Breast epithelium (tissue), 4 donors: ENCODE measurements at regions of chr11 and their contacts with region 1.

Region 1: GRCh38 chr11:2134022-2135010 is 4.9 kb downstream of the IGF2 start:
- DNase-seq: no peak
- H3K4me3 ChIP-seq: no peak overlapping the region
- H3K27ac ChIP-seq: no peak overlapping the region
- H3K4me1 ChIP-seq: peaks cover 7 to 8% of the 10 kb centered on the region in 2 donors
- H3K27me3 ChIP-seq: peaks cover 3 to 81% of the 10 kb centered on the region in 2 donors
- CTCF ChIP-seq: no peak
- POLR2A ChIP-seq: no peak

Region 2: DNA sequence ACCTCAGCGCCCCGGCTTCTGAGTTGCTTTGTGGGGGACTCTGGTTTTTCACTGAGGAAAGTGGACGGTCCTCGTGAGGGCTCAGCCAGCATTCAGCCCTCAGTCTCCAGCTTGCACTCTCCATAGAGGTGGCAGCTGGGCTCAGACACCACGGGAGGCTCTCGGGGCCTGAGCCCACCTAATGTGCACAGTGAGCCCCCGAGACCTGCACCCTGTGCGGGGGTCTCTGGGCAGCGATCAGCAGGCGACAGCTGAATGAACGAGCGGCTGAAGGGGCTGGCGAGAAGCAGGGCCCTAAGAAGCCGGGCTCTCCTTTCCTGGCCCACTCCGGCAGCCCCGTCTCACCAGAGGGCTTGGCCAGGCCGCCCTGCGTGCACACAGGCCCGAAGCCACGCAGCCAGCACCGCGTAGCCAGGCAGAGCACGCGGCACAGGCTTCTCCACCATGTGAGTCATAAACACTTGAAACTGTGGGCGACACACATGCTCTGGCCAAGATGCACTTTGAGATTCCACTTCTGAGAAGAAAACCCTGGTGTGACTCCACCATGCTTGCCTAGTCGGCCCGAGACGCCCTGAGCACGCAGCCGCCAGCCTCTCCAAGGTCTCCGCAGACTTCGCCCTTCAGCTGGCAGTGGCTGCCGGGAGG is 852.9 kb before region 1 on chr11:
- intact Hi-C with region 1: loop called (anchors 5 kb)
- DNase-seq: no peak
- H3K4me3 ChIP-seq: no peak overlapping the region
- H3K27ac ChIP-seq: peak overlapping the region in 1 of 2 donors; percentile 68
- H3K4me1 ChIP-seq: no peaks in the 10 kb centered on the region
- H3K27me3 ChIP-seq: no peaks in the 10 kb centered on the region
- CTCF ChIP-seq: no peak
- POLR2A ChIP-seq: no peak

Region 3: DNA sequence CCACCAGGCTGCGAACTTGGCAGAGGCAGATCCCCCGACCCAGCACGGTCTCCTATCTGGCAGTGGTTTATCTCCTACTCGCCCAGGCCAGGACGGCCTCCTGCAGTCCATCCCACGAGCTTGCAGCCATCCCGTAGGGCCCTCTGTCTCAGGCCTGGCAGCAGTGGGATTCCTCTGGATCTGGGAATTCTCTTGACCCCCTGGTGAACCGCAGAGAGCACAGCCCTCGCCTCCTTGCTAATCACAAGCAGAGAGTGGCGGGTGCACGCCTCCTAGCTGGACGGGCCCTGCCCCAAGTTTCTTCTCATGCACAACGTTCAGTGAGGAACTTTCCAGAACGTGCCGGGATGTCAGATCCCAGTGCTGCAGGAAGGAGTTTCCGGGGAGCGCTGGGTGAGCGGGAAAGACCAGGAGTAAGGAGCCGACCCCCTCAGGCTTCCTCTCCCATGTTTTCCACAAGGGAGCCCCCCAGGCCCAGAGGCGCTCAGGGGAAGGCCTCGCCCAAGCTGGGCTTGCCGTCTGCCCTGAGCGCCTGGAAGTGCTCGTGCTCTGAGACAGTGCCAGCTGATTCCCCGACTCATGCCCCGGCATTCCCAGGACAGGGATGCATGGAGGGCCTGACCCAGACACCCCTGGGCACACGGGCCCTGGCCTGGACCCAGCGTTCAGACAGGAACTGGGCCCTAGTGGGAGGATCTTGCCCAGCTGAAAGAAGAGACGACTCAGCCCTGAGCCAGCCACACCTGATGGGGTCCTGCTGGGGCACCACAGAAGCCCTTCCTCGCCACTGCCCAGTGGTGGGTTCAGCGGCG is 19.7 kb before region 1 on chr11:
- intact Hi-C with region 1: no loop called
- DNase-seq: no peak
- H3K4me3 ChIP-seq: no peak overlapping the region
- H3K27ac ChIP-seq: no peak overlapping the region
- H3K4me1 ChIP-seq: no peaks in the 10 kb centered on the region
- H3K27me3 ChIP-seq: no peaks in the 10 kb centered on the region
- CTCF ChIP-seq: no peak
- POLR2A ChIP-seq: no peak

Region 4: GRCh38 chr11:2549876-2550620 is 415.7 kb after region 1 on chr11:
- intact Hi-C with region 1: no loop called
- DNase-seq: no peak
- H3K4me3 ChIP-seq: no peak overlapping the region
- H3K27ac ChIP-seq: no peak overlapping the region
- H3K4me1 ChIP-seq: no peaks in the 10 kb centered on the region
- H3K27me3 ChIP-seq: no peaks in the 10 kb centered on the region
- CTCF ChIP-seq: no peak
- POLR2A ChIP-seq: no peak